ENCODE measurements at regions of chr12 and their contacts with region 1.

Region 1: GRCh38 chr12:132414634-132415326 is 75.2 kb upstream of the FBRSL1 start:
- DNase-seq: peak; percentile 67 to 89
- ATAC-seq: peak; percentile 78 to 96 (median 96)
- H3K4me3 ChIP-seq: no peak overlapping the region
- H3K4me3 Mint-ChIP-seq: no peak overlapping the region
- H3K27ac ChIP-seq: no peak overlapping the region
- H3K27ac Mint-ChIP-seq: no peak overlapping the region
- H3K4me1 ChIP-seq: peaks cover 11% of the 10 kb centered on the region
- H3K4me1 Mint-ChIP-seq: peaks cover 0 to 4% of the 10 kb centered on the region in 2 donors
- H3K27me3 ChIP-seq: no peaks in the 10 kb centered on the region
- H3K27me3 Mint-ChIP-seq: peaks cover 0 to 3% of the 10 kb centered on the region in 2 donors
- CTCF ChIP-seq: peak; percentile 93

Region 2: GRCh38 chr12:132336451-132337413 is 78.0 kb before region 1 on chr12:
- intact Hi-C with region 1: no loop called
- DNase-seq: no peak
- ATAC-seq: no peak
- H3K4me3 ChIP-seq: no peak overlapping the region
- H3K4me3 Mint-ChIP-seq: no peak overlapping the region
- H3K27ac ChIP-seq: no peak overlapping the region
- H3K27ac Mint-ChIP-seq: no peak overlapping the region
- H3K4me1 ChIP-seq: no peaks in the 10 kb centered on the region
- H3K4me1 Mint-ChIP-seq: no peaks in the 10 kb centered on the region
- H3K27me3 ChIP-seq: no peaks in the 10 kb centered on the region
- H3K27me3 Mint-ChIP-seq: peaks cover 0 to 3% of the 10 kb centered on the region in 2 donors
- CTCF ChIP-seq: no peak

Region 3: GRCh38 chr12:132393245-132393795 is 21.5 kb before region 1 on chr12:
- intact Hi-C with region 1: no loop called
- DNase-seq: no peak
- ATAC-seq: no peak
- H3K4me3 ChIP-seq: no peak overlapping the region
- H3K4me3 Mint-ChIP-seq: no peak overlapping the region
- H3K27ac ChIP-seq: no peak overlapping the region
- H3K27ac Mint-ChIP-seq: no peak overlapping the region
- H3K4me1 ChIP-seq: no peaks in the 10 kb centered on the region
- H3K4me1 Mint-ChIP-seq: no peaks in the 10 kb centered on the region
- H3K27me3 ChIP-seq: no peaks in the 10 kb centered on the region
- H3K27me3 Mint-ChIP-seq: peaks cover 5 to 12% of the 10 kb centered on the region in 2 donors
- CTCF ChIP-seq: no peak

Region 4: DNA sequence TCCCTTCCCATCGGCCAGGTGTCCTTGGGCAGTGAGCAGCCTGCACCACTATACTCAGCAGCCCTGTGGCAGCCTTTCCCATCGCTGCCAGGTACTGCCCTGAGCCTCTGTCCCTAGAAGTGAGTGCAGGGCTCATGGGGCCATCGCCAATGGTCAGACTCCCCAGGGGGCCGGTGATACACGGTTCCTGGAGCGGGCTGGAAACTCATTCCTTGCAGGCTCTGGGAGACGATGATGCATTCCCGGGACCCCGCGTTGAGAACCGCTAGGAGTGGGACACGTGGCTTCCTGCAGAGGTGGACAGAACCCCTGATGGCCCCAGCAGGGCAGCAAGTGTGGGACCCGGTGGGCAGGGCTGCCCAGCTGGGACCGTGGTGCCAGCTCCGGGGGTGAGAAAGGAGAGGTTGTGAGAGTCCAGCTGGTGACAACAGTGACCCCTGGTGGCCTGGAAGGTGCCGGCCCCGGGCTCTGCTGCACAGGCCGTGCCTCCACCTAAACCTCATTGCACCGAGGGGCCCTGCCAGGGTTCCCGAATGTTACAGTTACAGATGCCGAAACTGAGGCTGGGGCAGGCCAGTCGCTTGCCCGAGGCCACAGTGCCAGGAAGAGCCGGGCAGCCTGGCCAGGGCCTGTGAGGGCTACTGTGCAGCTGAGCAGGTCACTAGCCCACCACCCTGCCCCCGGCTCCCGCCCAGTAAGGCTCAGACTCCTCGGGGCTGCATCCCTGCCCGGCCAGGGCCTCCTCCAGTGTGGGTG is 109.0 kb after region 1 on chr12:
- intact Hi-C with region 1: loop called (anchors 1 kb)
- DNase-seq: peak; percentile 76 to 84
- ATAC-seq: peak; percentile 79 to 87 (median 80)
- H3K4me3 ChIP-seq: no peak overlapping the region
- H3K4me3 Mint-ChIP-seq: no peak overlapping the region
- H3K27ac ChIP-seq: no peak overlapping the region
- H3K27ac Mint-ChIP-seq: no peak overlapping the region
- H3K4me1 ChIP-seq: peaks cover 16% of the 10 kb centered on the region
- H3K4me1 Mint-ChIP-seq: peaks cover 0 to 30% of the 10 kb centered on the region in 2 donors
- H3K27me3 ChIP-seq: no peaks in the 10 kb centered on the region
- H3K27me3 Mint-ChIP-seq: no peaks in the 10 kb centered on the region
- CTCF ChIP-seq: peak; percentile 90

Region 5: DNA sequence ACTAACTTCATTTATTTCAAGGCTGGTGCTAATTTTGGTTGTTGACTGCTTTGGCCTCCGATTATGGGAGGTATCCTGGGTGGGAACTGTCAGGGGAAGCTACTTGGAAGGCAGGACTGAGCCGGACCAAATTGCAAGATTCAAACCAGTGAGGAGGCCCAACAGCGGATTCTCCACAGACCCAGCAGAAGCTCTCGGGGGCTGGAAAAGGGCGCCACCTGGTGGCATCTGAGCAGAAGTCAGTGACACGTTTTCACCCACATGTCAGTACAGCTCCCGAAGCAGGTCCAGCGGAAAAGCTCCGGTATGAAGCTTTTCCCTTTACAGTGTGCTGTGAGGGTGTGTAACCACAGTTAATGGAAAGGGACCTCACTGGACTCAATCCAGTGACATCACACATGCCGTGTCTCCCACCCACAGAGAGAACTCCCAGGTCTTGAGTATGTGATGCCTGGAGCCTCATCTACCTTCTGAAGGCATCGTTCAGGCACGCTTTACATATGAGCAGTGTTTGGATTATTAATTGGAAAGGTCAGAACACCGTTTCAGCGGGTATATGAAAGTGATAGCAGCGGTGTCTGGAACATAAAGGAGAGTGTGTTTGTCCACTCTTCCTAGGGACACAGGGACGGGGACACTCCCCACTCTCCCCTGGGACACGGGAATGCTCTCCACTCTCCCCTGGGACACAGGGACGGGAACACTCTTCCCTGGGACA is 200.2 kb after region 1 on chr12:
- intact Hi-C with region 1: loop called (anchors 1 kb)
- DNase-seq: peak; percentile 77 to 91
- ATAC-seq: peak; percentile 82 to 94 (median 93)
- H3K4me3 ChIP-seq: no peak overlapping the region
- H3K4me3 Mint-ChIP-seq: no peak overlapping the region
- H3K27ac ChIP-seq: no peak overlapping the region
- H3K27ac Mint-ChIP-seq: no peak overlapping the region
- H3K4me1 ChIP-seq: peaks cover 10% of the 10 kb centered on the region
- H3K4me1 Mint-ChIP-seq: peaks cover 10 to 16% of the 10 kb centered on the region in 2 donors
- H3K27me3 ChIP-seq: peaks cover 27% of the 10 kb centered on the region
- H3K27me3 Mint-ChIP-seq: peaks cover 32 to 39% of the 10 kb centered on the region in 2 donors
- CTCF ChIP-seq: peak; percentile 86

Measured in natural killer cell (primary cell).